Dendritic cell treated with granulocyte-macrophage colony-stimulating factor and Interleukin-4, amounts not matched to agents 40 ng/mL and 50 ng/mL, for 4 days (primary cell): ENCODE measurements at regions of chr18 and their contacts with region 1.

Region 1: GRCh38 chr18:24118750-24119577 is 19.9 kb upstream of the CABYR start:
- H3K4me3 Mint-ChIP-seq: no peak overlapping the region
- H3K27ac Mint-ChIP-seq: no peak overlapping the region
- H3K4me1 Mint-ChIP-seq: peaks cover 10% of the 10 kb centered on the region
- H3K27me3 Mint-ChIP-seq: no peaks in the 10 kb centered on the region

Region 2: GRCh38 chr18:22632191-22632590 is 1486.8 kb before region 1 on chr18:
- intact Hi-C with region 1: no loop called
- H3K4me3 Mint-ChIP-seq: no peak overlapping the region
- H3K27ac Mint-ChIP-seq: no peak overlapping the region
- H3K4me1 Mint-ChIP-seq: no peaks in the 10 kb centered on the region
- H3K27me3 Mint-ChIP-seq: no peaks in the 10 kb centered on the region

Region 3: DNA sequence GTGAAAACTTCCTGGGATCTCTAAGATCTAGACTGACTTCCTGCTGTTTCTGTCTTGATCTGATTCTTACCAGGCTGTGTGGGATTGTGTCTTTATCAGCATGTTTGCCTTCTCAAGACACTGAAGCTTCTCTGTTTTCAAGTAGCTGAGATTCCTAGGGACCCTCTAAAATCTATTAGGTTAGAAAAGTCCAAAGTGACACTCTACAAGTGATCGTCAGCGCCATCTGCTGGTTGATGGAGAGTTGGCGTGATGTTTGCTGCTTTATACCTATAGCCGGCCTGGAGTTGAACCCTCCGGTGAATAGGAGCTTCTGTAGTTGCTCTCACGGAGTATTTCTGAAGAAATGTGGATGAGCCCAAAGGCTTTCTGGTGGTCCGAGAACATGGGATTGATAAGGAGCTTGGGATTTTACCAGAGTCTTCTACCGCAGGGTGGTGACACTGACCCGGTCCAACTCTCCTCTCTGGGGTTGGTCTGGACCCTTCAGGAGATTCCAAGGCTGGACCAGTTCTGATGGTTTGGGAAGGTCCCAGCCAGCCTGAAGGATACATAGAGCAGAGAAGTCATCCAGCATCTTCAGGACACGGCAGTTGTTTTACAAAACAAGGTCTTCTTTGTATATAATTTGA is 200.4 kb before region 1 on chr18:
- intact Hi-C with region 1: loop called (anchors 1 kb)
- H3K4me3 Mint-ChIP-seq: no peak overlapping the region
- H3K27ac Mint-ChIP-seq: no peak overlapping the region
- H3K4me1 Mint-ChIP-seq: no peaks in the 10 kb centered on the region
- H3K27me3 Mint-ChIP-seq: peaks cover 9% of the 10 kb centered on the region

Region 4: GRCh38 chr18:24014986-24015638 is 103.9 kb before region 1 on chr18:
- intact Hi-C with region 1: loop called (anchors 5 kb)
- H3K4me3 Mint-ChIP-seq: peak overlapping the region; percentile 90
- H3K27ac Mint-ChIP-seq: peak overlapping the region; percentile 93
- H3K4me1 Mint-ChIP-seq: peaks cover 67% of the 10 kb centered on the region
- H3K27me3 Mint-ChIP-seq: peaks cover 5% of the 10 kb centered on the region